T-cell (primary cell): ENCODE measurements at regions of chr3 and their contacts with region 1.

Region 1: DNA sequence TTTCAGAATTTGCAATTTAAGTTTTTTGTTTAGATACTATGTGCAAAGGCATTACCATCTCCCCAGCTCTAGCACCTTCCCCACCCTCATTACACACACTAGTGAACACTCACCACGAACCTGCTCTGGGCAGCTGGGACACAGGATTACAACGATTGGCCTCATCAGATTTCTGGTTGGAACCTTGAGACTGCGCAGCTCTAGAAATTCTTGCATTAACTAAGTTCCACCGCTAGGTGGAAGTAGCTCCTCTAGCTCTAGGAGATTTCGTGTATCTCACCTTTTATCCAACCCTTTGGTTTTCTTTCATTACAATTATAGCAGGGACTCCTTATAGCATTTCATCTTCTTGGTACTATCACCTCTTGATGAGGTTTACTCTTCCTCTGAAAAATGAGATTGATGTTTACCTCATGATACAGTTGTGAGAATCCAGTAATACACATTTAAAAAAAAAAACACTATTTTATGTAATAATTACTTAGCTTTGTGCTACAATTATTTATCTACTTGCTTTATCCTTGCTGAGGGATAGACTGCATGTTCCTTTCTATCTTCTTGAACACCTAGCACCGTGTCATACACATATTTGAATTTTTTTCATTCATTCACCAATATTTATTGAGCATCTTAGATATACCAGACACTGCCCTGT is 28.7 kb upstream of the PLOD2 start:
- DNase-seq: peak in 2 of 35 experiments; percentile 2 to 42
- ATAC-seq: peak in 3 of 4 experiments; percentile 36 to 50 (median 37)
- H3K4me3 ChIP-seq: no peak overlapping the region
- H3K4me3 Mint-ChIP-seq: no peak overlapping the region
- H3K27ac ChIP-seq: no peak overlapping the region
- H3K27ac Mint-ChIP-seq: no peak overlapping the region
- H3K4me1 ChIP-seq: no peaks in the 10 kb centered on the region
- H3K4me1 Mint-ChIP-seq: no peaks in the 10 kb centered on the region
- H3K27me3 ChIP-seq: no peaks in the 10 kb centered on the region
- H3K27me3 Mint-ChIP-seq: peaks cover 0 to 13% of the 10 kb centered on the region in 2 donors

Region 2: GRCh38 chr3:146594843-146595482 is 405.3 kb after region 1 on chr3:
- CTCF ChIA-PET with region 1: interaction called, 4 to 11 read pairs
- POLR2A ChIA-PET with region 1: no interaction called
- DNase-seq: peak in 1 of 35 experiments; percentile 16
- ATAC-seq: no peak
- H3K4me3 ChIP-seq: no peak overlapping the region
- H3K4me3 Mint-ChIP-seq: no peak overlapping the region
- H3K27ac ChIP-seq: no peak overlapping the region
- H3K27ac Mint-ChIP-seq: no peak overlapping the region
- H3K4me1 ChIP-seq: no peaks in the 10 kb centered on the region
- H3K4me1 Mint-ChIP-seq: no peaks in the 10 kb centered on the region
- H3K27me3 ChIP-seq: peaks cover 0 to 3% of the 10 kb centered on the region in 2 experiments
- H3K27me3 Mint-ChIP-seq: peaks cover 0 to 3% of the 10 kb centered on the region in 2 donors